Naive thymus-derived CD4-positive, alpha-beta T cell (primary cell): ENCODE measurements at regions of chrX and their contacts with region 1.

Region 1: DNA sequence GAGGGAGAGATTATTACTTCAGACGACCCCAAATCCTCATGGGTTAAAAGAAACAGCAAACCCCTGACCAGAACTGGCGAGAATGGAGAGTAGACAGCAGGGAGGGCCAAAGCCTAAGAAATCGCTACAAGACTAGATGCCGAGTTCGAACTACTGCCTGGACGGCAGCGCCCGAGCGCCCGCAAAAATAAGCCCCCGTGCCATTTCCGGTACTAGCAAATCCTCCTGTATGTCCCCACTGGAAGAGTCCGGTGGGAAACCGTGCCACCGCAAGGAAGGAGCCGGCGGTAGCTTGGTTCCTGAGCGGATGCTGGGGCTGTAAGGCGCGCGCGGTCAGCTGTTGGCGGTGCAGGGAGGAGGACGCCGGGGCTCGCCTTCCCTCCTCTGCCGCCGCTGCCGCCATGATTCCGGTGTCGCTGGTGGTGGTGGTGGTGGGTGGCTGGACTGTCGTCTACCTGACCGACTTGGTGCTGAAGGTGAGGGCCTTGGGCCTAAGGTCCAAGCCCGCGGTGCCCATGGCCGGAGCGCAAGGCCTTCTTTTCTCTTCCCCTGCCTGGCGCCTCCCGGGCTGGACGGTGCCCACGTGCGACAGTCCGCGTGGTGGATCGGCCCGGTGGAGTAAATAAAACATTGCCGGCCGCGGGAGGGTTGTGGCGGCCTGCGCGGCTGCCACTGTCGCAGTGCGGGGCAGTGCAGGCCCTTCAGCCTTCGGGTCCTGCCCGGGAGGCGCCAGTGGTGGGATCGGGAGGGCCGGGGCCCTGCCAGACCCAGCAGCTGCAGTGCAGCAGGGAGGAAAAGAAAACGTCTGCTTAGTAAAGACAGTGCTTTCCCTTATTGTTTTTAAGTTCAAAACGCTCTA is at the start of gene MBTPS2:
- DNase-seq: peak; percentile 51 to 82 (median 77)
- ATAC-seq: peak; percentile 97
- H3K4me3 ChIP-seq: peak within 1 kb of the TSS; percentile 83
- H3K4me3 Mint-ChIP-seq: peak within 1 kb of the TSS; percentile 82 to 96 (median 88)
- H3K27ac ChIP-seq: peak within 1 kb of the TSS; percentile 72
- H3K27ac Mint-ChIP-seq: peak within 1 kb of the TSS; percentile 83 to 95 (median 89)
- H3K4me1 ChIP-seq: peaks cover 0 to 8% of the 10 kb centered on the region in 2 donors
- H3K4me1 Mint-ChIP-seq: peaks cover 0 to 19% (median 7%) of the 10 kb centered on the region in 7 donors
- H3K27me3 ChIP-seq: no peaks in the 10 kb centered on the region
- H3K27me3 Mint-ChIP-seq: peaks cover 0 to 3% (median 0%) of the 10 kb centered on the region in 5 donors
- total RNA-seq, gene MBTPS2: 5.2 to 9.9 (median 7.2) TPM

Region 2: GRCh38 chrX:20141281-20142220 is 1698.0 kb before region 1 on chrX and contains the start of gene EIF1AX:
- CTCF ChIA-PET with region 1: no interaction called
- POLR2A ChIA-PET with region 1: no interaction called
- intact Hi-C with region 1: loop called in 1 of 2 experiments (anchors 2 kb)
- DNase-seq: peak; percentile 82 to 100 (median 98)
- ATAC-seq: peak; percentile 99
- H3K4me3 ChIP-seq: peak within 1 kb of the TSS; percentile 84
- H3K4me3 Mint-ChIP-seq: peak within 1 kb of the TSS; percentile 80 to 96 (median 88)
- H3K27ac ChIP-seq: peak within 1 kb of the TSS; percentile 93
- H3K27ac Mint-ChIP-seq: peak within 1 kb of the TSS; percentile 68 to 97 (median 89)
- H3K4me1 ChIP-seq: peaks cover 8 to 13% of the 10 kb centered on the region in 2 donors
- H3K4me1 Mint-ChIP-seq: peaks cover 4 to 42% (median 27%) of the 10 kb centered on the region in 7 donors
- H3K27me3 ChIP-seq: no peaks in the 10 kb centered on the region
- H3K27me3 Mint-ChIP-seq: no peaks in the 10 kb centered on the region
- total RNA-seq, gene EIF1AX: 40.2 to 67.5 (median 51.6) TPM

Region 3: GRCh38 chrX:21781525-21781924 is 58.0 kb before region 1 on chrX:
- CTCF ChIA-PET with region 1: no interaction called
- POLR2A ChIA-PET with region 1: no interaction called
- intact Hi-C with region 1: loop called in 1 of 2 experiments (anchors 5 kb)
- DNase-seq: no peak
- ATAC-seq: no peak
- H3K4me3 ChIP-seq: no peak overlapping the region
- H3K4me3 Mint-ChIP-seq: peak overlapping the region in 1 of 10 donors; percentile 20
- H3K27ac ChIP-seq: no peak overlapping the region
- H3K27ac Mint-ChIP-seq: no peak overlapping the region
- H3K4me1 ChIP-seq: no peaks in the 10 kb centered on the region
- H3K4me1 Mint-ChIP-seq: peaks cover 0 to 25% (median 7%) of the 10 kb centered on the region in 7 donors
- H3K27me3 ChIP-seq: no peaks in the 10 kb centered on the region
- H3K27me3 Mint-ChIP-seq: peaks cover 0 to 9% (median 0%) of the 10 kb centered on the region in 5 donors

Region 4: GRCh38 chrX:21940356-21940829 is 100.8 kb after region 1 on chrX and contains the start of gene SMS:
- CTCF ChIA-PET with region 1: no interaction called
- POLR2A ChIA-PET with region 1: no interaction called
- intact Hi-C with region 1: loop called (anchors 1 to 2 kb)
- DNase-seq: peak; percentile 8 to 64 (median 16)
- ATAC-seq: peak; percentile 77
- H3K4me3 ChIP-seq: peak within 1 kb of the TSS; percentile 46
- H3K4me3 Mint-ChIP-seq: peak within 1 kb of the TSS; percentile 78 to 90 (median 84)
- H3K27ac ChIP-seq: peak within 1 kb of the TSS; percentile 62
- H3K27ac Mint-ChIP-seq: peak within 1 kb of the TSS; percentile 60 to 90 (median 80)
- H3K4me1 ChIP-seq: peaks cover 0 to 5% of the 10 kb centered on the region in 2 donors
- H3K4me1 Mint-ChIP-seq: peaks cover 8 to 22% (median 19%) of the 10 kb centered on the region in 7 donors
- H3K27me3 ChIP-seq: no peaks in the 10 kb centered on the region
- H3K27me3 Mint-ChIP-seq: no peaks in the 10 kb centered on the region
- total RNA-seq, gene SMS: 14.7 to 57.4 (median 20.4) TPM

Region 5: DNA sequence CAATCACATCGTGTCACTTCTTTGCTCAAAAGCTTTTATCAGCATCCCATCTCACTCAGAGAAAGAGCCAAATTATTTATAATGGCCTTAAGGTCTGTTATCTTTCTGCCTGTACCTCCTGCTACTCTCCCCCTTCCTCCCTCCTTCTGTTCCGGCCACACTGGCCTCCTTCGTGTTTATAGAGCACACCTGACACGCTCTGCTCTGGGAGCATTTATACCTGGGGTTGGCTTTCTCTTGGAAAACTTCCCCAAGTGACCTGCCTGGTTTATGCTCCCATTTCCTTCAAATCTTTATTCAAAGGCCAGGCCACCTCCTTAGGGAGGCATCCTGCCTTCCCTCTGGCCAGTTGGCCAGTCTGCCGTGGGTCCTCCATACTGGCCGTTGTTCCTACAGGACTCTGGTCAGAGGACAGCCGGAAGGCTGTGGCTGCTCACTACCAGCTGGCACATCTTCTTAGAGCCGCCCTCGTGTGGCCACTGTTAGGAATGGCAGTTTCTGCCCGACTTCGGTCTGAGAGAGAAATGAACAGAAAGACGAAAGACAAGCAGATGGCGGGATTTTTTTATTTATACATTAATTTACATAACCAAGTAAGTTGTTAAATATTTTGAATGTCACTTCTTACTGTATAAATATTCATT is 353.0 kb after region 1 on chrX:
- CTCF ChIA-PET with region 1: no interaction called
- POLR2A ChIA-PET with region 1: no interaction called
- intact Hi-C with region 1: loop called in 1 of 2 experiments (anchors 1 kb)
- DNase-seq: peak in 8 of 9 donors; percentile 4 to 49 (median 34)
- ATAC-seq: peak; percentile 70
- H3K4me3 ChIP-seq: no peak overlapping the region
- H3K4me3 Mint-ChIP-seq: no peak overlapping the region
- H3K27ac ChIP-seq: no peak overlapping the region
- H3K27ac Mint-ChIP-seq: no peak overlapping the region
- H3K4me1 ChIP-seq: no peaks in the 10 kb centered on the region
- H3K4me1 Mint-ChIP-seq: peaks cover 0 to 5% (median 2%) of the 10 kb centered on the region in 7 donors
- H3K27me3 ChIP-seq: no peaks in the 10 kb centered on the region
- H3K27me3 Mint-ChIP-seq: peaks cover 0 to 5% (median 0%) of the 10 kb centered on the region in 5 donors